ENCODE measurements at regions of chr21 and their contacts with region 1.

Region 1: GRCh38 chr21:42534421-42535378 is 21.0 kb downstream of the SLC37A1 start:
- DNase-seq: no peak
- H3K4me3 ChIP-seq: no peak overlapping the region
- H3K27ac ChIP-seq: peak overlapping the region; percentile 35
- H3K4me1 ChIP-seq: peaks cover 9% of the 10 kb centered on the region
- H3K27me3 ChIP-seq: no peaks in the 10 kb centered on the region
- CTCF ChIP-seq: no peak

Region 2: DNA sequence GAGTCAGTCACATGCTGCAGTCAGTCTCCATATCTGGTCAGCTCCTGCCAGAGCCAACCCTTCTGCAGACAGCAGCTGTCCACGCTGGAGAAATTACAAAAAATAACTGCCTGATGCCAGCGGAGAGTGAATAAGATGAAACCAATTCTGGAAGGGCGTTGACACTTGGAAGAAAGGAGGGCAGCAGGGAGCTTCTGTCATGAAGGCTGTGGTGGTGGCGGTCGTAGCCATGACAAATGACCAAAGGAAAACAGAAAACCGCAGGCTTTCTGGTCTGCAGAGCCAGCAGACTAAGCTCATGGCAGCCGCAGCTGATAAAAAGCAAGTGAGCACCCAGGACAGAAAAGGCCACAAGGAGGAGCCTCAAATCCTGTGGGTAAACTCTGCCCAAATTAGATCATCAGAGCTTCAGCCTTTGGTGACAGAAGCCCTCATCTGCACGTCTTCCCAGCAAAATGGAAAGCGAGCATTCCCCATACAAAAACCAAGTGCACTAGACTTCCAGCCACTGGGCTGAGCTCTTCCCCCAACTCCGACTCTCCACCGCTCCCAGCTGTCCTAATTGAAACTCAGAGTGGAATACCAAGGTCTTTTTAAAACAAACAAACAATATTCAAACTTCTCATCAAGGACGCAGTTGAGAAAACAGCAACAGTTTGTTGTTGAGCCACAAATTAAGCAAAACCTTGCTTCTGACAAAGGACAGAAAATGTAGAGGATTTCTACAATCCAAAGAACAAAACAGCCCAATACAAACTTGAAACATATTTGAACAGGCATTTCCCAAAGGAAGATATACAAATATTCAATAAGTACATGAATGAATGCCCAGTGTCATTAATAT is 67.3 kb before region 1 on chr21:
- intact Hi-C with region 1: loop called (anchors 5 kb)
- DNase-seq: peak; percentile 52
- H3K4me3 ChIP-seq: no peak overlapping the region
- H3K27ac ChIP-seq: peak overlapping the region; percentile 82
- H3K4me1 ChIP-seq: peaks cover 31% of the 10 kb centered on the region
- H3K27me3 ChIP-seq: no peaks in the 10 kb centered on the region
- CTCF ChIP-seq: peak; percentile 32

Region 3: DNA sequence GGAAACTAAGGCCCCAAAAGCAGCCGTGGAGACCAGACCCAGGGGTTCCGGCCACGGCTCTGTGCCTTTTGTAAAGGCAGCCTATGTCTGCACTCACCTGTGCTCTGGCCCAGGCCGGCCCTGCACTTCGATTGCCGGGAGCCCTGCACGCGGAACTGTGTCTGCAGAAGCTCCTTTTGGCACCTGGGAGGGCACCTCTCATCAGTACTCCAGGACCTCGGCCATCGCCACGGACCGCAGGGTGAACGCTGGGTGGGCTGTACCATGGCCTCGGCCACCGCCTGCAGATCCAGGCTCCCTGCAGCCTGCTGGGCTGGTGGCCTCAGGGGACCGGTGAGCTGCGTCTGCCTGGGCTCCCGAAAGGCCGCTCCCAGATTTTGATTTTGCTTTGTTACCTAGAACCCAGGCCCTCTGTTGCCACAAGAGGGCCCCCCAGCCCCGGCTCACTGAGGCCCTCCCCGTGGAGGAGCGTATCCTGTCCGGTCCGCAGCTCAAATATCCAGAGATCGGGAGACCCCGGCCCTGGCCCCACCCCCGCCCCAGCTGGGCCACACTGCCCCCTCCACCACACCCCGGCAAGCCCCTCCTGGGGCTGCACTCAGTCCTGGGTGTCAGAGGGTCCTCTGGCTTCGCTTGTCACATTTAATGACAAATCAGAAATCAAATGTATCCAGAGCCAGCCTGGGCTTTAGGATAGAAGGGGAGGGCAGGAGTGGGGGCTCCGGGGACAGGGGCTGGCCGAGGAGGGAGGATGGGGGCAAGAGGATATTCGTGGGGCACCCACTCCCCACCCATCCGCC is 58.5 kb after region 1 on chr21:
- intact Hi-C with region 1: no loop called
- DNase-seq: peak; percentile 84
- H3K4me3 ChIP-seq: no peak overlapping the region
- H3K27ac ChIP-seq: no peak overlapping the region
- H3K4me1 ChIP-seq: peaks cover 6% of the 10 kb centered on the region
- H3K27me3 ChIP-seq: no peaks in the 10 kb centered on the region
- CTCF ChIP-seq: peak; percentile 81